ENCODE measurements at regions of chr10 and their contacts with region 1.

Region 1: DNA sequence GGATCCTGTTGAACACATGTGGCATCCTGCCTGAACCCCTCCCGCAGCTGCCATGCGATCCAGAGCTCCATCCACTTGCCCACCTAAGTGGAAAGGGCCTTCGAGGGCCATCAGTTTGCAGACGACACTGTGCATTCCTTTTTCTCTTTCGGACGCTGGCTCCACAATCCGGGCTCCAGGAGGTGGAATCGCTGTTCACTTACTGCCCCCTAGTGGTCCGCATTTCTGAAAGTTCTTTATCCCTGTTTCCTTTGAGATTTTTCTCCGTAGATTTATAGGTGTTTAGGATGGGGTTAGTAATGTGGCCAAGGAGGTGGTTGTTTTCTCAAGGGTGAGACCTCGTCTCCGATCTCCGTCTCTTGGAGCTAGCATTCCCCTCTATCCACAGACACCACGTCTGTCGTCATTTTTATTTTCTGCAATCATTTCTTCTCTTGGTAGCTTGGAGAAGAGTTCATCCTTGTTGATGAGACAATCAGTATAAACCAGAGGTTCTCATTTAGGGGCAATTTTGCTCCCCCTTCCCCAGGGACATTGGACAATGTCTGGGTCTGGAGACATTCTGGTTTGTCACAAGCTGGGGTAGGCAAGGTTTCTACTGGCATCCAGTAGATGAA is 204.6 kb downstream of the ARHGAP21 start:
- DNase-seq: no peak
- H3K4me3 ChIP-seq: no peak overlapping the region
- H3K27me3 ChIP-seq: no peaks in the 10 kb centered on the region
- CTCF ChIP-seq: peak; percentile 80

Region 2: GRCh38 chr10:23585186-23585585 is 933.9 kb before region 1 on chr10:
- CTCF ChIA-PET with region 1: no interaction called
- POLR2A ChIA-PET with region 1: no interaction called
- DNase-seq: no peak
- H3K4me3 ChIP-seq: no peak overlapping the region
- H3K27me3 ChIP-seq: no peaks in the 10 kb centered on the region
- CTCF ChIP-seq: no peak

Region 3: GRCh38 chr10:24360282-24361127 is 158.6 kb before region 1 on chr10:
- CTCF ChIA-PET with region 1: interaction called, 16 read pairs
- POLR2A ChIA-PET with region 1: no interaction called
- DNase-seq: no peak
- H3K4me3 ChIP-seq: no peak overlapping the region
- H3K27me3 ChIP-seq: no peaks in the 10 kb centered on the region
- CTCF ChIP-seq: peak; percentile 83

Region 4: DNA sequence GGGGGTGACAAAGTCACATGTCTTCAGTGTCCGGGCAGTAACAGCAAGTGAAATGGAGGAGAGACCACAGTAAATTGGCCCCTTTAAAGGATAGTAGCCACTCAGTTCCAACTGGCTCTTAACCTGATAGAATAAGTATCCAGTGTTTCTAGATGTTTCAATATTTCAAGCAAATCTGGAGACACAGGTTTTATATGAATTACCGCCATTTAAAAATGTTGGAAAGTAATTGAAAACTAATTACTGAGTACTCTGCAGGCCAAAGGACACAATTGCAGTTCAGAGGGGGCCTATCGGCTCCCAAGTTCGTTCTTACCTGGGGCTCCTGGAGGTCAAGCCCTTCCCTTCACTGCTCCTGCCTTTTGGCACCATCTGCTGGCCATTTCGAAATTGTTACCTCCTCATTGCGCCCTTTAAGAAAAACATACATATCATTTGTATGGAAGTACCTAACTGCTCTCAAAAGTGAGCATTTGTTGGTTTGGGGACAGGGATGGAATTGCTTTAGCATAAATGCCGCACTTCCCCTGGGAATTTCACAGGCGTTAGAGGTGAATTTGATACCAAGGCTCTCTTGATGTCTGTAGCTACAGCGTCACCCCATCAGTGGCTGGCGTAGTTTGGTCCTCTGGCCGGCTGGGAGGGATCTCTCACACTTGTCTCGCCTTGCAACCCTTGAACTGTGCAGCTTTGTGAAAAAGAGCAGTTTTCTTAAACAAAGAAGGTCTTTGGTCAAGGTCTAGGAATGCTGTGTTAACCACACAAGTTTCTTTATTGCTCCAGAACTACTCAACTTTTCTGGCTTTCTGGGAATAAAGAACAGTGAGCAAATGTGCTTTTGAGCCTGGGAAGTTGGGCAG is 15.4 kb before region 1 on chr10:
- CTCF ChIA-PET with region 1: interaction called, 43 read pairs
- POLR2A ChIA-PET with region 1: no interaction called
- DNase-seq: no peak
- H3K4me3 ChIP-seq: no peak overlapping the region
- H3K27me3 ChIP-seq: no peaks in the 10 kb centered on the region; the same call in 1 of the 2 replicates
- CTCF ChIP-seq: peak; percentile 67

Region 5: GRCh38 chr10:24533981-24534380 is 14.9 kb after region 1 on chr10:
- CTCF ChIA-PET with region 1: interaction called, 17 read pairs
- POLR2A ChIA-PET with region 1: no interaction called
- DNase-seq: no peak
- H3K4me3 ChIP-seq: no peak overlapping the region
- H3K27me3 ChIP-seq: no peaks in the 10 kb centered on the region
- CTCF ChIP-seq: no peak

Region 6: DNA sequence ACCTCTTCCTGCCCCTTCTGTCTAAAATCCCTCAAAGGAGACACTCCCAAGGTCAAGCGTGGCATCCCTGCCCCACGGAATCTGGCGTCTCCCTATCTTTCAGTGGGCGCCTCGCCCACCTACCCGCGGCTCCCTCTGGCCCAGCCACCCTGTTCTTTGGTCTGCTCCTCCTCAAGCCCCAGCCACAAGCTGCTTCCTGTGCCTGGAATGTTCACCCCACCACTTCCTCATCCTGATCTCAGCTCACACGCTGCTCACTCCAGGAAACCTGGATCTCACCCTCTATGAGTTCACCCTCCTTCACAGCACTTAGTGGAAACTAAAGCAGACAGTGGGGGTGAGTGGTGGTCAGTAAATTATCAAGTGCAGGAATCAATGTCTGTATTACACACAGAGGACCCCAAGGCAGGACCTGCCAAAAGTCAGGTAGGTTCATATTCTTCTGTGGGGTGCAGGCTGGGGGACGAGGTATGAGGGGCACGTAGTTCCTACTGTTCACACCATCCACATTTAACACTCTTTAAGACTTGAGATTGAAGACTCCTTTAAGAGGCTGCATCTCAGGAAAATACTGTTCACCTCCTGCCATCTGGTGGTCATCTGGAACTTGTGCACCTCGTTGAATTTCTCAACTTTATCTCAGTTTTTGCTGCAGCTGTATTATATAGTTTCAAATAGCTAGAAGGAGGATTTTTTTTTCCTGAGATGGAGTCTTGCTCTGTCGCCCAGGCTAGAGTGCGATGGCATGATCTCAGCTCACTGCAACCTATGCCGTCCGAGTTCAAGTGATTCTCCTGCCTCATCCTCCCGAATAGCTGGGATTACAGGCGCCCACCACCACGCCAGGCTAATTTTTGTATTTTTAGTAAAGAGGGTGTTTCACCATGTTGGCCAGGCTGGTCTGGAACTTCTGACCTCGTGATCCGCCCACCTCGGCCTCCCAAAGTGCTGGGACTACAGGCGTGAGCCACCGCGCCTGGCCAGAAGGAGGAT is 38.0 kb after region 1 on chr10:
- CTCF ChIA-PET with region 1: interaction called, 12 read pairs
- POLR2A ChIA-PET with region 1: no interaction called
- DNase-seq: no peak
- H3K4me3 ChIP-seq: no peak overlapping the region
- H3K27me3 ChIP-seq: 0 out of 2 replicates have a peak, but pooled peaks cover 1% of the 10 kb centered on the region
- CTCF ChIP-seq: peak; percentile 69

Measured in BJ (cell line).